ENCODE measurements at regions of chr1 and their contacts with region 1.

Region 1: DNA sequence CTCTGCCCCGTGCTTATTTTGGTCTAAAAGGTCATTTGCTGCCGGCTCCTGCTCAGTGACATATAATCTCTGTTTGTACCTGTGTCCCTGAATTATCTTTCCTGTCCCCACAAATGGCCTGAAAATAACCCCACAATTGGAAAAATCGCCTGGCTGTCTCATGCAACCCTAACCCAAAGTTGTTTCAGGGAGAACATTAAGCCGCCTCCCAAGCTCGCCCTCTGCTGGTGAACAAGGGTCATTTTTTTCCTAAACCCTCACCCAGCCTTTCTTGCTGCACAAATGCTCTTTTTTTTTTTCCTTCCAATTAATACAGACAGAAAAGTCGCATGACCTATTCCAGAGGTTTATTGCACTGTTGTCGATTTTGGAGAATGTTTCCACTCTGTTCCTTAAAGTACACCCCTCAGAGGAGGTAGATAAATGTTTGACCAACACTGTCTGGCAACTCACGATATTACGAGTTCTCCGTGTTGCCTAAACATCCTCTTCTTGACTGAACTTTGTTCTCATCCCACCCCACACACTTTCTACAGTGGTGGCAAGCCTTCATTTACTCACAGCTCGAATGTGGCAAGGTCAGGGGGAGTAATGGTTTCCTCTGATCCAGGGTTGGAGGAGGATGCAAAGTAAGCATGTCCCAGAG is 148.7 kb downstream of the ZZZ3 start:
- DNase-seq: peak; percentile 74
- H3K4me3 ChIP-seq: no peak overlapping the region
- H3K27ac ChIP-seq: no peak overlapping the region
- H3K4me1 ChIP-seq: peaks cover 4% of the 10 kb centered on the region
- H3K27me3 ChIP-seq: no peaks in the 10 kb centered on the region
- CTCF ChIP-seq: peak; percentile 92

Region 2: DNA sequence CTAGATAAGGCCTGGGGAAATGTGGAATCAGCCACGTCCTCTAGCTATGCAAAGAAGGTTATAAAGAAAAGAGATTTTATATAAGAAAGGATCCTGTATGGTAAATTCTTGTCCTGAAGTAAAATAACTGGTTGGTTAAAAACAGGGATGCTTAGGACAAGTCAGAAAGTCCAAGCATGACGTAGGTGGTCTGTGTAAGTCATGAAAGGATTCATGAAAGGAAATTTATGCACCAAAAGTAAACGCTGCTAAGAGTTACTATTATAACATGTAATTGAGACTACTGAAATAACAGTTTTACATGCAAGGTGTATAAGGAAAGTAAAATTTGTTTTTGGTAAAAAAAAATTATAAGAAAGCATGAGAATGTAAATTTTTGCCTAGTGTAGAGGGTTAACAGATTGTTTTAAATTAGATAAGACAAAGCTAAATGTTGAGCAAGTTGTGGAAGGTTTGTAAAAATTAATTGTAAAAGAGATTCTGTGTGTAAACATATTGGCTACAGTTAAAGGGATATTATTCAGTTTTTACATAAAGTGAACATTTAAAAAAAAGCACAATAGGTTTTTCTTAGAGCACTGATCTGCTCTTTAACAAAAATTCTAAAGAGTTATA is 358.4 kb before region 1 on chr1:
- CTCF ChIA-PET with region 1: no interaction called
- POLR2A ChIA-PET with region 1: no interaction called
- intact Hi-C with region 1: no loop called
- DNase-seq: peak; percentile 22
- H3K4me3 ChIP-seq: no peak overlapping the region
- H3K27ac ChIP-seq: no peak overlapping the region
- H3K4me1 ChIP-seq: no peaks in the 10 kb centered on the region
- H3K27me3 ChIP-seq: no peaks in the 10 kb centered on the region
- CTCF ChIP-seq: no peak

Region 3: DNA sequence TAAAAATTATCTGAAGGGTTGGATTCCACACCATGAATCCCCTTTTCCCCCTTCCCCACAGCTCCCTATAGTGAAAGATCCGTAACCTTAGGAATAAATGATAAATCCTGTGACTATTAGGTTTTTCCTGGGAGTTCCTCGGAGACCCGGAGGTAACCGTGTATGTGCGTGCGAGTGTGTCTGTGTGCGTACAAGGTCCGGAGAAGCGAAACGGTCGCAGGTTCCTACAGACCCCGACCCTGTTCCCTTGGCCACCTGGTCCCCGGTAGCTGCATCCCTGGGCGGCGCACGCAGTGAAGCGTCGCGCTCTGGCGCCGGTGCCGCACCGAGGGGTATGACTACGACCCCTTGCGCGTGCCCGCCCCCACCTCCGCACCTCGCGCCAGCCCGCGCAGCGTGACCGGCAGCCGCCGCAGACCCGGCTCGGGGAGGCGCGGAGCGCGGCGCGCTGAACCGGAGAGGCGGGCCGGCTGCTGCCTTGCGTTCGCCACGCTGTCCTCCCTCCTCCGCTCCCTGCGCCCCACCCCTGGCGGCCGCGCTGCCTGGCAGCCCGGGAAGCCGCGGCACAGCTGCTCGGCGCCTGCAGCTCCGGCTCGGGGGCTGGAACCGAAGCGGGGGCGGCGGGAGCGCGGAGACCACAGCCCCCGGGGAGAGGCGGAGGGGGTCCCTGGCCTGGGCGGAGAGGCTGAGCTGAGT is 252.1 kb before region 1 on chr1 and contains the start of gene AK5:
- CTCF ChIA-PET with region 1: no interaction called
- POLR2A ChIA-PET with region 1: no interaction called
- intact Hi-C with region 1: loop called (anchors 10 kb)
- DNase-seq: peak; percentile 51
- H3K4me3 ChIP-seq: peak within 1 kb of the TSS; percentile 53
- H3K27ac ChIP-seq: no peak within 1 kb of the TSS
- H3K4me1 ChIP-seq: no peaks in the 10 kb centered on the region
- H3K27me3 ChIP-seq: peaks cover 24% of the 10 kb centered on the region
- CTCF ChIP-seq: no peak
- total RNA-seq, gene AK5: 0.47 and 0.94 TPM in 2 replicates

Region 4: DNA sequence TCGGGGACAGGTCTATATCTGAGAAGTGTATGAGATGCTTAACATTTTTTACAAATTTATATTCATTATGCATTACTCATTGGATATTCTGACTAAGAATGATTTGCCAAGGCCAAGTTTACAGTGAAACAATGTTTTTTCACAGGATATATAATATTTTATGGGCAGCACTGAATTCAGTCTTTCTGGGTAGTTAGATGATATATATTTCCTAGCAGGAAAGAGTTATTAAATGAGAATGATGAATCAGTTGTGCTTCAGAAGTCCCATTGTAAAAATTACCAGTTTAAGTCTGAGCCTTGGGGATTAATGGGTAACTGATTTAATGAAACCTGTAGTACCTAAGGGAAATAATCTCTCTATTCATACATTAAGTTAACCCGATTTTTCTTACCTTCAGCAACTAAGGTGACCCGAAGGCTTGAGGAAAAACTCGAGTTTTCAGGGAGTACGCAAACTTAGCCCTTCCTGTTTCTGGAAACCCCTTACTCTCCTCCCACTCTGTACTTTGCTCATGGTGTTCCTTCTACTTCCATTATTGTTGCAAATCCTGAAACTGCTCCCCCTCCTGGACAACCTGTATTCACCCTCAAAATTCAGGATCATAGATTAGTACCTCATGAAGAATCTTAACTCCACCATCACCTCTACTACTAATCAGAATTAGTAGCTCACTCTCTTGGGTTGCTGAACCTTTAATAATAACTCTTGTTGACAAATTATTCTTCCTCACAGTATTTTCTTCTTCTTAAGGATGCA is 116.9 kb before region 1 on chr1:
- CTCF ChIA-PET with region 1: no interaction called
- POLR2A ChIA-PET with region 1: no interaction called
- intact Hi-C with region 1: loop called (anchors 10 kb)
- DNase-seq: peak; percentile 54
- H3K4me3 ChIP-seq: no peak overlapping the region
- H3K27ac ChIP-seq: no peak overlapping the region
- H3K4me1 ChIP-seq: peaks cover 9% of the 10 kb centered on the region
- H3K27me3 ChIP-seq: no peaks in the 10 kb centered on the region
- CTCF ChIP-seq: peak; percentile 67

Region 5: DNA sequence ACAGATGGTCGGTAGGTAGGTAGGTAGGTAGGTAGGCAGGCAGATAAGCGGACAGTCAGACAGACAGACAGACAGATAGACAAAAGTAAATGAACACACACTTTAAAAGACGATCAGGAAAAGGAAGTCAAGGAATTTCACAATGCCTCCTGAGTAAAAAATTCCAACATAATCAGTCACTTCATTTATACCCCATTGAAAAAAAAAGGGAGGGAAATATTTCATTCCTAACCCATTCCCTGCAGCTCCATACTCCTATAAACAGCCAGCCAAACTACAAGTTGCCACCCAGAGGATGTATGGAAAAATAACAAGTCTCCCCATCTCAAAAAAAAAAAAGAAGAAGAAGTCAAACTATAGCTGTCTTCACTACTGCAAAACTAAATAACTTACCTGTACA is 105.3 kb after region 1 on chr1:
- CTCF ChIA-PET with region 1: no interaction called
- POLR2A ChIA-PET with region 1: no interaction called
- intact Hi-C with region 1: no loop called
- DNase-seq: no peak
- H3K4me3 ChIP-seq: no peak overlapping the region
- H3K27ac ChIP-seq: no peak overlapping the region
- H3K4me1 ChIP-seq: peaks cover 22% of the 10 kb centered on the region
- H3K27me3 ChIP-seq: no peaks in the 10 kb centered on the region
- CTCF ChIP-seq: no peak